Right cardiac atrium (tissue), 5 donors: ENCODE measurements at regions of chr20 and their contacts with region 1.

Region 1: DNA sequence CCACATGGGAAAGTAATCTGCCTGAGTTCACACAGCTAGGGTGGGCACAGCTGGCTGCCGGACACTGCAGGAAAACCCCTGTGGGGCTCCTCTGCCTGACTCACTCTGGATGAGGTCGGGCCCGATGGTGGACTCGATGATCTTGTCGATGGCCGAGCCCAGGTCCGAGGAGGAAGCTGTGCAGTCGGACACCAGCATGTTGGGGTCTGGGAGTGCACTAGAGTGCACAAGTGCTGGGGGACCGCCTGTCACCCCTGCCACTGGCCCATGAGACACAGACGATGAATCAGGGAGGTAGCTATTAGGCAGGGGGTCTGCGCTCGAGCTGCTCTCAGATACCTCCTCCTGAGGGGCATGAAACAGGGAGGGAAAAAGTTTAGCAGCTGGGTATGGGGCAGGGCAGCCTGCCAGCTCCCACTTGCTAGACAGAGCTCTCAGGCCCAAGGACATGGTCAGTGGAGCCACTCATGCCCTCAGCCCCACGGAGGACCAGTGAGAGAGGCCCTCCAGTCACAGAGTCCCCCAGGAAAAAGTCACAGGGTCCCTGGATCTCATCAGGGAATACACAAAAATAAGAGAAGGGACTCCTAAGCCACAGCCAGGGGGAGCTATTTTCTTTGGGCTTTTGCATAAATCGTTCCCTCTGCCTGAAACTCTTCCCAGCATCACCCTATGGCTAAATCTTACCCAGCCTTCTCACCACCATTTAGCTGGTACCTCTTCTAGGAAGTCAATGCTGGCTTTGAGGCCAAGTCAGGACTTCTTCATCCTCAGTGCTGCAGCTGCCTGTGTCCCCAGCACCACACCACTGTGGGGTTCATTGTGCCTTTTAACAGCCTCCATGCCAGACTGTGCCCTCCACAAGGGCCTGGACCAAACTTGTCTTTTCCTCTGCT is 2.4 kb downstream of the ZNF335 start:
- DNase-seq: peak in 2 of 3 donors; percentile 63 to 64
- ATAC-seq: no peak
- H3K4me3 ChIP-seq: no peak overlapping the region
- H3K27ac ChIP-seq: no peak overlapping the region
- H3K4me1 ChIP-seq: no peaks in the 10 kb centered on the region
- H3K27me3 ChIP-seq: no peaks in the 10 kb centered on the region

Region 2: GRCh38 chr20:45798935-45799642 is 170.5 kb before region 1 on chr20:
- intact Hi-C with region 1: loop called in 2 of 4 experiments (anchors 10 kb)
- DNase-seq: peak; percentile 47 to 77 (median 66)
- ATAC-seq: peak; percentile 80 to 83
- H3K4me3 ChIP-seq: no peak overlapping the region
- H3K27ac ChIP-seq: peak overlapping the region; percentile 43
- H3K4me1 ChIP-seq: no peaks in the 10 kb centered on the region
- H3K27me3 ChIP-seq: no peaks in the 10 kb centered on the region

Region 3: DNA sequence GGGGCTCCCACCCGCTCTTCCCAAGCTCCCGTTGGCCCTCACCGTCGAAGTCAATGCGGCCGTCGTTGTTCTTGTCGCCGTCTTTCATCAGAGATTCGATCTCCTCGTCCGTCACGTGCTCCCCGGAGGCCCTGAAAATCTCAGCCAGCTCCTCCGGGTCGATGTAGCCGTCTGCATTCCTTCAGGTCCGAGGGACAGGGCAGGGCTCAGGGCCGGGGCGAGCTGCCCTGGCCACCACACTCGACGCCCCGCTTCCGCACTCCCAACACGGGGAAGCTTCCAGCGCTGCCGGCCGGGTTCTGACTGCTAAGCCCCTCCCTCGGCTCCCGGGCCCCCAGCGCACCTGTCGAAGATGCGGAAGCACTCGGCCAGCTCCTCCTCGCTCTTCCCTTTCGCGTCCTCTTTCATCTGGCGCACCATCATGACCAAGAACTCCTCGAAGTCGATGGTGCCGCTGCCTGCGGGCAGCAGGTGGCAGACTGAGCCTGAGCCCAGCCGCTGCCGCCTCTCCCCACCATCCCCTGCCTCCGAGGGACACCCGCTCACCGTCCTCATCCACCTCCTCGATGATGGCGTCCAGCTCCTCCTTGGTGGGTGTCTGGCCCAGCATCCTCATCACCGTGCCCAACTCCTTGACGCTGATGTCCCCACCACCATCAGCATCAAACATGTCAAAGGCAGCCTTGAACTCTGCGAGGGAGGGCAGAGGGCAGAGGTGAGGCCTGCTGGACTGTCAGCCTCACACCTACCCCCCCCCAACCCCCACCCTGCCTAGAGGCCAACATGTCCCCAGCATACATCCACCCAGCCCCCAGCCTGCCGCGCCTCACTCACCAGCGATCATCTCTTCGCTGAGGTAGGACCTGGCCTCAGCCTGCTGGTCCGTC is 145.4 kb before region 1 on chr20:
- intact Hi-C with region 1: loop called in 1 of 4 experiments (anchors 10 kb)
- DNase-seq: peak; percentile 39 to 79 (median 77)
- ATAC-seq: peak; percentile 58 to 61
- H3K4me3 ChIP-seq: no peak overlapping the region
- H3K27ac ChIP-seq: no peak overlapping the region
- H3K4me1 ChIP-seq: peaks cover 10% of the 10 kb centered on the region
- H3K27me3 ChIP-seq: no peaks in the 10 kb centered on the region